PC-9 (cell line): ENCODE measurements at regions of chr1 and their contacts with region 1.

Region 1: GRCh38 chr1:111481387-111482221 is 7.8 kb downstream of the C1orf162 start:
- DNase-seq: peak; percentile 80 to 81
- H3K4me3 ChIP-seq: no peak overlapping the region
- H3K27ac ChIP-seq: no peak overlapping the region
- H3K4me1 ChIP-seq: peaks cover 7% of the 10 kb centered on the region; the same call in 1 of the 2 replicates
- H3K27me3 ChIP-seq: no peaks in the 10 kb centered on the region
- CTCF ChIP-seq: peak; percentile 86

Region 2: DNA sequence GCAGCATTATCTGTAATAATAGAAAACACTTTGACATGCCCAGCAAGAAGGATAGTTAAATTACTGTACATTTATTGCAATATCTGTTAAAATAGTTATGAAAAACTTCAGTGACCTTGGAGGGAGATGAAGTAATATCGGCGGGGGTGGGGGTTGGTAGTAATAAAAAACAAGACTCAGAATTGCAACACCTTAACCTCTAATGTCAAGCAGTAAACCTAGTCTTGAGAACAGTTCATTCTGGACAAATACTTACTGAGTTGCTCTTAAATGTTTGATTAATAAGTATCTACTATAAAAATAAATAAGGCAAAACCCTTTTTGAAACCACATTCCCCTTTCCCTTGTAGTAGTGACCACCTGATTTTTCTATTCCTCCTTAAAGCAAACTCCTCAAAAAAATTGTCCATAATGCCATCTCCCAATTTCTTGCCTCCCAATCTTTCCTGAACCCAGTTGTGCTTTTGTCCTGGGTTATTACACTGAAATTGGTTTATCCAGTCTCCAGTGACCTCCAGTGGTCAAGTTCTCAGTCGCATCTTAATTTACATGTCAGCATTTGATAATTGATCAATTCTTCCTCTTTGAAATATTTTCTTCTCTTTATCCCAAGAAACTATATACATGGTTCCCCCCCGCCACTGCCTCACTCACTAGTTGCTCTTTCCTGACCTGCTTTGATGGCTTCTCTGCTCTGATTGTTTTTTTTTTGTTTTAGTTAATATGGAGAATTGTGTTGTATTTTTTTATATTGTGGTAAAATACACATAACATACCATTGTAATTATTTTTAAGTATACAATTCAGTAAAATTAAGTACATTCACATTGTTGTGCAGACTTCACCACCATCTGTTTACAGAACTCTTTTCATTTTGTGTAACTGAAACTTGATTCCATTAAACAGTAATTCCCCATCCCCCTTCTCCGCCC is 174.7 kb after region 1 on chr1:
- CTCF ChIA-PET with region 1: no interaction called
- POLR2A ChIA-PET with region 1: no interaction called
- intact Hi-C with region 1: loop called (anchors 1 kb)
- DNase-seq: peak; percentile 20 to 59
- H3K4me3 ChIP-seq: no peak overlapping the region
- H3K27ac ChIP-seq: no peak overlapping the region
- H3K4me1 ChIP-seq: peaks cover 25% of the 10 kb centered on the region
- H3K27me3 ChIP-seq: no peaks in the 10 kb centered on the region
- CTCF ChIP-seq: peak; percentile 92

Region 3: DNA sequence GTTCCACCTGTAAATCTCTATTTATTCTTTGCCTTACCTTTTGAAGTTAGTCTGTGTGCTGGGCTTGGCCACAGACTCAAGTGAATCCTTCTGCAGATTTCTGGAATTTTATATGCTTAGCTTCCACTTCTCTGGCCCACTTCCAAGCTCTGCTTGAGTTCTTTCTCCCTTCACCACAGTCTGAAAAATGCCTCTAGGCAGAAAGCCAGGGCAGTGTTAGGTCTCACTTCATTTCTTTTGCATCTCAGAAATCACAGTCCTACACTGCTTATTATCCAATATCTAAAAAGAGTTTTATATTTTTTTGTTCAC is 208.7 kb after region 1 on chr1:
- CTCF ChIA-PET with region 1: interaction called, 11 read pairs
- POLR2A ChIA-PET with region 1: no interaction called
- intact Hi-C with region 1: no loop called
- DNase-seq: peak in 1 of 2 experiments; percentile 24
- H3K4me3 ChIP-seq: no peak overlapping the region
- H3K27ac ChIP-seq: 0 out of 2 replicates have a peak overlapping the region, but pooled peaks have one; percentile 1
- H3K4me1 ChIP-seq: no peaks in the 10 kb centered on the region
- H3K27me3 ChIP-seq: no peaks in the 10 kb centered on the region
- CTCF ChIP-seq: no peak

Region 4: DNA sequence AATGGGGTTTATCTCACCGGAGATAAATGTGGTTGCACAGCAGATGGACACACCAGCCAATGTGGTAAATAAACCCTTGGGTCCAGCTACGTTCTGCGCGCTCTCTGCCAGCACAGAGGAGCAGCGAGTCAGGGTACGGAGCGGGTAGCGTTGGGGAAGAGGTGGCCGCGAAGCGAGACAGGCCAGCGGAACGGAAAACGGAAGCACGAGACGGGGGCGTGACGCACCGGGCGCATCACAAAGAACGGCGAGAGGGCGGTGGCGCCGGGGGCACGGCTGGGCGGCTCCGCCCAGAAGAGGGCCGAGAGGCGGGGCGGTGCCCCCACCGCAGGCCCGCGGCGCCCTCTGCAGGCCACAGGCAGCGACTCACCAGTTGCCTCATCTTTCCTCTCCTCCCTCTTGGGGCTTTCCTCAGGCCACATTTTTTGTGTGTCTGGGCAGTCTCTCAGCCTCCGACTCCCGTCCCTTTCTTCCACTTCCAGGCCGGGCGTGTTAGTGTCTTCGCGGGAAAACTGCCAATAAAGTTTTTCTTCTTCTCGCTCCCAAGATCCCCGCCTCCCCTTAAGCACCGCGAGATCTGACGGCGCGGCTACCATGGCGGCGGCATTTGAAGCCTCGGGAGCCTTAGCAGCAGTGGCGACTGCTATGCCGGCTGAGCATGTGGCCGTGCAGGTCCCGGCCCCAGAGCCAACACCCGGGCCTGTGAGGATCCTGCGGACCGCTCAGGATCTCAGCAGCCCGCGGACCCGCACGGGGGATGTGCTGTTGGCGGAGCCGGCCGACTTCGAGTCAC is 273.9 kb after region 1 on chr1 and contains the start of gene DDX20:
- CTCF ChIA-PET with region 1: interaction called, 3 read pairs
- POLR2A ChIA-PET with region 1: no interaction called
- intact Hi-C with region 1: loop called (anchors 5 kb)
- DNase-seq: peak; percentile 89 to 96
- H3K4me3 ChIP-seq: peak within 1 kb of the TSS; percentile 92
- H3K27ac ChIP-seq: peak within 1 kb of the TSS; percentile 64
- H3K4me1 ChIP-seq: peaks cover 20% of the 10 kb centered on the region
- H3K27me3 ChIP-seq: no peaks in the 10 kb centered on the region
- CTCF ChIP-seq: peak; percentile 90
- total RNA-seq, gene DDX20: 8.4 and 8.9 TPM in 2 replicates

Region 5: DNA sequence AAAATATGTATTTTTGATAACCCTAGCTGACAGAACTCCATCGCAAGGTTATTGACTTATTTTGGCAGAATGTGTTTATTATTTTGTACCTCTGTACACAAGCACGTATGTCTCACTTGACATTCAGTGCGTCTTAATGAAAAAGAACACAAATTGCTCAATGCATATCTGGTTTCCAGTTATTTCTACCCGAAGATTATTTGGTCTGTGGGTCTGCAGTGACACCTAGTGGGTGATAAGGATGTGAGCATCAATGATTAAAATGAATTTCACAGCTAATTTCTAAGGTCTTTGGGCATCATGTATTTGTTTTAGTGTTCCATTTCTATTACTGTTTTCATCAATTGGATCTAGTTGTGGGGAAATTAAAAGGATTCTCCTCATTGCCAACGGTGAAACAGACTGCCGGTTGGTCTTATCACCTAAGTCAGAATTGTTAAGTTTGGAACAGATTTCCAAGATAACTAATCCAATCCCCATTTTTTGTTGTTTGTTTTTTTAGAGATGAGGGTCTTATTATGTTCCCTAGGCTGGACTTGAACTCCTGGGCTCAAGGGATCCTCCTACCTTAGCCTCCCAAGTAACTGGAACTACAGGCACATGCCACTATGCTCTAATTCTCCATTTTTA is 288.0 kb after region 1 on chr1:
- CTCF ChIA-PET with region 1: interaction called, 8 read pairs
- POLR2A ChIA-PET with region 1: no interaction called
- intact Hi-C with region 1: loop called (anchors 1 kb)
- DNase-seq: peak; percentile 20 to 72
- H3K4me3 ChIP-seq: no peak overlapping the region
- H3K27ac ChIP-seq: no peak overlapping the region
- H3K4me1 ChIP-seq: no peaks in the 10 kb centered on the region
- H3K27me3 ChIP-seq: peaks cover 6% of the 10 kb centered on the region; the same call in 1 of the 2 replicates
- CTCF ChIP-seq: peak; percentile 96

Region 6: DNA sequence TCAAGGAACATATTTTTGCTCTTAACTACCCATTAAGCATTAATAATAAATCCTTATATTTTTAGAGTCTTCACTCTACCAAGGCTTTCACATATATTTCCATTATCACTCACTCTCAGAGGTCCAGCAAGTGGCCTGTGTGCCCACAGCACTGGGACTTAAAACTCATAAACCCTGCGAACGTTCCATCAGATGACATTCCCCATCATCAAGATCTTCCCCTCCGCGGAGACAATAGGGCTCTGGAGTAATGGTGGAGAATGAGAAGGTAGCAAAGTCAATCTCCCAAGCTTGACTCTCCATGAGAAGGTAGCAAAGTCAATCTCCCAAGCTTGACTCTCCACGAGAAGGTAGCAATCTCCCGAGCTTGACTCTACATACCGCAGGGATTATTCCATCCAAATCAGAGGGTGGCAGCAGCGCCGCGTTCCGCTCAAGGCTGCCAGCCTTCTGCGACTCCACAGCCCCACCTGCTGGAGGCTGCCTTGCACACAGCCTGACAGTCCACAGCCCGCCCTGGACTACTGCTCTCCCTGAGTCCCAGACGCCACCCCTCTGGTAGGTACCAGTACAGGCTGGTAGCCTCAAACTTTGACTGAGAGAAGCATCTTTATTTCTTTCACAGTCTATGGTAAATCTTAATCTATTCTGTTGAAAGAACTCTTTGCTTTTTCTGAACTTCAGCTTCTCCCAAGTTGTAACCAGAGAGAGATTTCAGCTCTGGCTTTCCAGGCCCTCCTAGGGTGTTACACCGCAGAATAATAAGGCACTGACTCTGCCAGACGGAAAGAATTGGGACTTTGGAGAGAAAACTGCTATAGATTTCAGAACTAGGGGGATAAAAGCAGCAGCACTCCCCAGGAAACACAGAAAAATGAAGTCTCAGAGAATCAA is 888.0 kb after region 1 on chr1:
- CTCF ChIA-PET with region 1: no interaction called
- POLR2A ChIA-PET with region 1: no interaction called
- intact Hi-C with region 1: loop called (anchors 10 kb)
- DNase-seq: peak; percentile 67 to 88
- H3K4me3 ChIP-seq: no peak overlapping the region
- H3K27ac ChIP-seq: no peak overlapping the region
- H3K4me1 ChIP-seq: no peaks in the 10 kb centered on the region
- H3K27me3 ChIP-seq: peaks cover 55% of the 10 kb centered on the region
- CTCF ChIP-seq: peak; percentile 99